CD4-positive, alpha-beta T cell (primary cell): ENCODE measurements at regions of chr16 and their contacts with region 1.

Region 1: GRCh38 chr16:29007730-29008593 is 23.1 kb downstream of the LAT start:
- DNase-seq: peak; percentile 48 to 85 (median 72)
- ATAC-seq: peak; percentile 79
- H3K4me3 ChIP-seq: no peak overlapping the region
- H3K4me3 Mint-ChIP-seq: peak overlapping the region; percentile 60
- H3K27ac ChIP-seq: peak overlapping the region; percentile 73 to 77
- H3K27ac Mint-ChIP-seq: peak overlapping the region; percentile 97
- H3K4me1 ChIP-seq: peaks cover 63% of the 10 kb centered on the region
- H3K4me1 Mint-ChIP-seq: peaks cover 67% of the 10 kb centered on the region
- H3K27me3 ChIP-seq: no peaks in the 10 kb centered on the region
- H3K27me3 Mint-ChIP-seq: no peaks in the 10 kb centered on the region
- CTCF ChIP-seq: no peak

Region 2: GRCh38 chr16:28974437-28975157 is 33.4 kb before region 1 on chr16 and contains the start of gene SPNS1:
- CTCF ChIA-PET with region 1: interaction called, 6 read pairs
- POLR2A ChIA-PET with region 1: interaction called, 13 read pairs
- intact Hi-C with region 1: no loop called
- DNase-seq: peak; percentile 77 to 95 (median 86)
- ATAC-seq: peak; percentile 89
- H3K4me3 ChIP-seq: peak within 1 kb of the TSS; percentile 88
- H3K4me3 Mint-ChIP-seq: peak within 1 kb of the TSS; percentile 99
- H3K27ac ChIP-seq: peak within 1 kb of the TSS; percentile 43 to 55
- H3K27ac Mint-ChIP-seq: peak within 1 kb of the TSS; percentile 94
- H3K4me1 ChIP-seq: peaks cover 33% of the 10 kb centered on the region
- H3K4me1 Mint-ChIP-seq: peaks cover 43% of the 10 kb centered on the region
- H3K27me3 ChIP-seq: no peaks in the 10 kb centered on the region
- H3K27me3 Mint-ChIP-seq: no peaks in the 10 kb centered on the region
- CTCF ChIP-seq: no peak
- total RNA-seq, gene SPNS1: 24.4 to 28.1 TPM

Region 3: DNA sequence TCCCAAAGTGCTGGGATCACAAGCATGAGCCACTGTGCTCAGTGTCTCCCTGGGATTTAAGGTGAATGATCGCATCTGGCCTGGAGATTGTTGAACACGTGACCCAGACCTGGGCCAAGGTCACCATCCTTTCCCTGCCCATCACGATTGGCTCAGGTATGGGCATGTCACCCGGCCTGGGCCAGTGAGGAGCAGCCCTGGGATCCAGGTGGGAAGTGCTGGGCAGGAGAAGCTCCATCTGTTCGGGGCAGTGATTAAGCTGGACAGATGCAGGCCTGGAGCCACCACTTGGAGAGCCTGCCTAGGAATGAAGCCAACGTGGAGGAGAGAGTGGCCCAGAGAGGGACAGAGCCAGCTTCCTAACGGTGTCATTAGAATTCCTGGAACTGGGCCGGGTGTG is 16.3 kb before region 1 on chr16:
- CTCF ChIA-PET with region 1: interaction called, 3 read pairs
- POLR2A ChIA-PET with region 1: interaction called, 45 read pairs
- intact Hi-C with region 1: no loop called
- DNase-seq: no peak
- ATAC-seq: no peak
- H3K4me3 ChIP-seq: no peak overlapping the region
- H3K4me3 Mint-ChIP-seq: no peak overlapping the region
- H3K27ac ChIP-seq: no peak overlapping the region
- H3K27ac Mint-ChIP-seq: peak overlapping the region; percentile 100
- H3K4me1 ChIP-seq: peaks cover 62% of the 10 kb centered on the region
- H3K4me1 Mint-ChIP-seq: peaks cover 51% of the 10 kb centered on the region
- H3K27me3 ChIP-seq: no peaks in the 10 kb centered on the region
- H3K27me3 Mint-ChIP-seq: no peaks in the 10 kb centered on the region
- CTCF ChIP-seq: no peak

Region 4: DNA sequence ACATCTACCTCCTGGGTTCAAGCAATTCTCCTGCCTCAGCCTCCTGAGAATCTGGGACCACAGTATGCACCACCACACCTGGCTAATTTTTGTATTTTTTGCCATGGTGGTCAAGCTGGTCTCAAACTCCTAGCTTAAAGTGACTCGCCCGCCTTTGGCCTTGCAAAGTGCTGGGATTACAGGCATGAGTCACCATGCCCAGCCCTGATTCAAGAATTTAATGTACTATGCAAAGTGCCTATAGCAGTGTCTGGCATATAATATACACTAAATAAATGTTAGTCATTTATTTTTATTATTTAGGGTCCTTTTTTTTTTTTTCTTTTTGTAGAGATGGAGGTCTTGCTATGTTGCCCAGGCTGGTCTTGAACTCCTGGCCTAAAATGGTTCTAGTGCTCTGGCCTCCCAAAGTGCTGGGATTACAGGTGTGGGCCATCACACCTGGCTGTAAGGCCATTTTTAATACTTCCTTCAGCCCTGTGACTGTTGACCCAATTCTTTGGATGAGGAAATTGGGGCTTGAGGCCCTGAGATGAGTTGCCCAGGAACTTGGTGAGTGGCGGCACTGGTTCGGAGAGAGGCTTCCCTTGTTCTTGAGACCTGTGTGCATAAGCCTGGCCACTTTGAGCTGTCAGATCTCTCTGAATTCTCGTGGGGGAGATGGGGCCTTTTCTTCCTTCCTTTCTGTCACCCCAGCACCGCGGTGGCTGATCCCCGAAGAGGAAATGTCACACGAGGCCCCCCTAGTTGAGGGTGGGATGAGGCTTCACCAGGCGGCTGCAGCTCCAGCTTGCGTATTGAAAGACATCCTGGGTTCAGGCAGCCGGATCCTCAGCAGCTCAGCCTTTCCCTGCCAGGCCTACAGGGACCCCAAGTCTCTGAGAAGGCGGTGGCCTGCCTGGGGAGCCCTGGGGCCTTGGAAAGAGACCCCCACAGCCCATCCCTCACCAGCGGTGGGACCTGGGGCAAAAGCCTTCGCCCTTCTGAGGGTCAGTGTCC is 15.6 kb after region 1 on chr16:
- CTCF ChIA-PET with region 1: interaction called, 3 read pairs
- POLR2A ChIA-PET with region 1: interaction called, 25 read pairs
- intact Hi-C with region 1: loop called (anchors 2 kb)
- DNase-seq: peak in 2 of 14 experiments; percentile 24 to 60
- ATAC-seq: peak; percentile 28
- H3K4me3 ChIP-seq: no peak overlapping the region
- H3K4me3 Mint-ChIP-seq: peak overlapping the region; percentile 67
- H3K27ac ChIP-seq: peak overlapping the region; percentile 45 to 57
- H3K27ac Mint-ChIP-seq: peak overlapping the region; percentile 80
- H3K4me1 ChIP-seq: peaks cover 48% of the 10 kb centered on the region
- H3K4me1 Mint-ChIP-seq: peaks cover 64% of the 10 kb centered on the region
- H3K27me3 ChIP-seq: no peaks in the 10 kb centered on the region
- H3K27me3 Mint-ChIP-seq: no peaks in the 10 kb centered on the region
- CTCF ChIP-seq: no peak

Region 5: GRCh38 chr16:29738514-29738913 is 730.6 kb after region 1 on chr16:
- CTCF ChIA-PET with region 1: no interaction called
- POLR2A ChIA-PET with region 1: no interaction called
- intact Hi-C with region 1: no loop called
- DNase-seq: peak in 13 of 14 experiments; percentile 37 to 91 (median 52)
- ATAC-seq: peak; percentile 90
- H3K4me3 ChIP-seq: no peak overlapping the region
- H3K4me3 Mint-ChIP-seq: peak overlapping the region; percentile 43
- H3K27ac ChIP-seq: peak overlapping the region; percentile 60 to 87
- H3K27ac Mint-ChIP-seq: peak overlapping the region; percentile 98
- H3K4me1 ChIP-seq: peaks cover 81% of the 10 kb centered on the region
- H3K4me1 Mint-ChIP-seq: peaks cover 85% of the 10 kb centered on the region
- H3K27me3 ChIP-seq: no peaks in the 10 kb centered on the region
- H3K27me3 Mint-ChIP-seq: no peaks in the 10 kb centered on the region
- CTCF ChIP-seq: no peak